ENCODE measurements at regions of chr6 and their contacts with region 1.

Region 1: DNA sequence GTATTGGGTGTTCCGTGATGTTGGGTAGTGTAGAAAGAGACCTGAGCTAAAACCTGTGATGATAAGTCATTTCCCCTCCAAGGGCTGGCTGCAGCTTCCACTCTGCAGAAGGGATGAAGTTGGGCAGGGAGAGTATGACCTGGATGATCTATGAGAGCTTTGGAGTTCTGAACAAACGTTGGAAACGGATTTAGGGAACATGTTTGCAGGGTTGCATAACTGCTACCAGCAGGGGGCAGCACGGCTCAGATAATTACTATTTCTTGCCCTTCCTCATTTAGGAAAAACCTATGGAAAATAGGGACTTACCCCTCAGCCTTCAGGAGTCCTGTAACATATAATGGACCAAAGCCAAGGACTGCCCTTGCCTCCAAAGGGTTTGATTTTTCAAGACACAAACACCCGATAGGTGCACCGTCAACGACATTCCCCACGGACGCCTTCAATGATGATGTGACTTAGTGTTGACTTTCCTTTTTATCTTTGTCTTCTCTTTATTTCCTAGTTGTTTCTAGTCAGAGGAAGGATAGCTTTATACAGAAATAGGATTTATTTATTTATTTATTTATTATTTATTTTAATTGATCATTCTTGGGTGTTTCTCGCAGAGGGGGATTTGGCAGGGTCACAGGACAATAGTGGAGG is 164.9 kb upstream of the SASH1 start:
- H3K4me3 ChIP-seq: no peak overlapping the region
- H3K27ac ChIP-seq: no peak overlapping the region
- H3K4me1 ChIP-seq: no peaks in the 10 kb centered on the region
- CTCF ChIP-seq: peak; percentile 31; the same call in 1 of the 2 replicates

Region 2: DNA sequence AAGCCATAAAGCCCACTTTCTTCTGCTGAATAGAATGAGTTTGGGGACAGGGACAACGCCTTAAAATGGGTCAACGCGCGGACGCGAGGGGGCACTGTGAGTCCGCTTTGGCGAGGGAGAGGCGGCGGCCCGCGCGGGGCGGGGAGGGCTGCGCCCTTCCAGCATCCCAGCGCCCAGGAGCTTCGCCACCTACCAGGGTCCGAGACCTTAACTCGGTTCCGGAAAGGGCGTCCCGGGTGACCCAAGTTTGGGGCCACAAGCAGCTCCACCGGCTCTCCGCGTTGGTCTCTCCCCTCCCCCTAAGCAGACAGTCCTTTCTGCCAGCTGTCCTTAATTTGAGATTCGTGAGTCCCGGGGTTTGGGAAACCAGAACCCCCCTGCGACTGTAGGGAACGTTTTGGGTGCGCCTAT is 671.0 kb before region 1 on chr6:
- CTCF ChIA-PET with region 1: interaction called, 32 read pairs
- POLR2A ChIA-PET with region 1: interaction called, 3 read pairs
- H3K4me3 ChIP-seq: peak overlapping the region; percentile 79
- H3K27ac ChIP-seq: no peak overlapping the region; the same call in 1 of the 2 replicates
- H3K4me1 ChIP-seq: peaks cover 11% of the 10 kb centered on the region
- CTCF ChIP-seq: peak; percentile 88

Region 3: GRCh38 chr6:147986846-147987245 is 190.9 kb before region 1 on chr6:
- CTCF ChIA-PET with region 1: no interaction called
- POLR2A ChIA-PET with region 1: no interaction called
- H3K4me3 ChIP-seq: no peak overlapping the region
- H3K27ac ChIP-seq: no peak overlapping the region
- H3K4me1 ChIP-seq: no peaks in the 10 kb centered on the region
- CTCF ChIP-seq: no peak

Region 4: DNA sequence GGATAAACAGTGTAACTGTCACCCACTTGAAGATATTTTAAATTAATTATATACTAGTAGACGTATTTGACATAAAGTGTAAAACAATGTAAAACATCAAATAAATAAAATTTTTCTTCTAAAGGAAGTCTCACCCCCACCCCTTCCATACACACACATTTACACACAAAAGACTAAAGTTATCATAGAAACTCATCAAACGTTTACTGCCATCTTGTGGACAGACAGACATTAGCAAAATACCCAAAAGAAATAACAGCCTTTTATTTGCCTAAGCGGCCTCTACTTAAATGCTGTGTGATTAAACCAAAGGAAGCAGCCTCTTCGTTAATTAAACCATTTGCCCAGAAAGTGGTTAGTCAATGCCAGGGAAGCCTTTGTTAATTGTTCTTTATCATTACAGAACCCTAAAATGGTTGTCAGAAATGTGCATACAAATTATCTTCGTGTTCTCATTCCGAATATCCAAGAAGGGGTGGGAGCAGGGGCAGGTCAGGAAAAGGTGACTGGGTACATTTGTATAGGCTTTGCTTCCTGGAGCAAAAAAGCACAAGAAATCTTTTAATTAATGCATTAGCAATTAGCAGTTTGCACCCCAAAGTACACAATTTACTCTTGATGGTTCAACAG is 11.3 kb before region 1 on chr6:
- CTCF ChIA-PET with region 1: interaction called, 27 read pairs
- POLR2A ChIA-PET with region 1: no interaction called
- H3K4me3 ChIP-seq: no peak overlapping the region
- H3K27ac ChIP-seq: no peak overlapping the region
- H3K4me1 ChIP-seq: no peaks in the 10 kb centered on the region
- CTCF ChIP-seq: peak; percentile 47

Region 5: GRCh38 chr6:148250975-148251685 is 73.4 kb after region 1 on chr6:
- CTCF ChIA-PET with region 1: interaction called, 30 read pairs
- POLR2A ChIA-PET with region 1: no interaction called
- H3K4me3 ChIP-seq: no peak overlapping the region
- H3K27ac ChIP-seq: no peak overlapping the region
- H3K4me1 ChIP-seq: peaks cover 8% of the 10 kb centered on the region; the same call in 1 of the 2 replicates
- CTCF ChIP-seq: peak; percentile 23; the same call in 1 of the 2 replicates

Region 6: GRCh38 chr6:148272597-148272996 is 94.9 kb after region 1 on chr6:
- CTCF ChIA-PET with region 1: no interaction called
- POLR2A ChIA-PET with region 1: no interaction called
- H3K4me3 ChIP-seq: no peak overlapping the region
- H3K27ac ChIP-seq: no peak overlapping the region
- H3K4me1 ChIP-seq: no peaks in the 10 kb centered on the region
- CTCF ChIP-seq: no peak

Region 7: GRCh38 chr6:148470606-148471299 is 293.0 kb after region 1 on chr6:
- CTCF ChIA-PET with region 1: interaction called, 28 read pairs
- POLR2A ChIA-PET with region 1: no interaction called
- H3K4me3 ChIP-seq: no peak overlapping the region
- H3K27ac ChIP-seq: no peak overlapping the region
- H3K4me1 ChIP-seq: no peaks in the 10 kb centered on the region
- CTCF ChIP-seq: no peak